ENCODE measurements at regions of chr11 and their contacts with region 1.

Region 1: DNA sequence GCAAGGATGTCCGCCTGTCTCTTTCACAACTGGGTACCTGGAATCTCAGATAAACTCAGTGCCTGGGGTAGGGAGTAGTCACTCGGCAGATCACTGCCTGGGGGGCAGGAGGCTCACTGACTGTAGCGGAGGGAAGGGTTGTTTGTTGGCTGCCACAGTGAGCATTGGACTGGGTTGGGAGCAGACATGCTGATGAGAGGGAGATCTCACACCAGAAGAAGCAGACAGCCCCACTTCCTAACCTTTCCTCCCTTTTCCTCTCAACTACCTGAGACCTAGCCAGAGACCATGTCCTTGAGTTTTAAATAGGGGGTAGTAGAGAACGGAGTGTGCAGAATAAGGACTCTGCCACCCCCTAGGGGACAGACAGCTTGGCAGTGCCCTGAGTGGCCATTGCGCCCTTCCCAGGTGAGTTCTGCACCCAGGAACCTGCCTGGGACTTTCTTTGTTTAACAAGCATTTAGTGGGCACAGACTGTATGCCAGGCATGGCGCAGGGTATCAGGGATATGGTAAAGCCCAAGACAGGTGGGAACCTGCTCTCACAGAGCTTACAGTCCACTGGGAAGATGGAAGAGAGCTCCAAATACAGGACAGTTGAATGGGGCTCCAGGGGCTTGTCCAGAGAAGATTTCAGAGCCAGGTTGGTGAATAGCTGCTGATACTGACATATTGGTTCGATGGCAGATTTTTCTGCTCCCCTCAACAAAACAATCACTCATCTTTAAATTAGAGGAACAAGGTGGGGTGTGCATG is 115.7 kb upstream of the NNMT start:
- DNase-seq: peak; percentile 12
- ATAC-seq: peak; percentile 86
- H3K4me3 ChIP-seq: no peak overlapping the region
- H3K27ac ChIP-seq: no peak overlapping the region
- H3K4me1 ChIP-seq: no peaks in the 10 kb centered on the region
- H3K27me3 ChIP-seq: peaks cover 2 to 4% of the 10 kb centered on the region in 2 experiments; a peak in 2 of 5 replicates
- CTCF ChIP-seq: peak; percentile 63
- EP300 ChIP-seq: no peak
- POLR2A ChIP-seq: no peak
- RAD21 ChIP-seq: no peak

Region 2: DNA sequence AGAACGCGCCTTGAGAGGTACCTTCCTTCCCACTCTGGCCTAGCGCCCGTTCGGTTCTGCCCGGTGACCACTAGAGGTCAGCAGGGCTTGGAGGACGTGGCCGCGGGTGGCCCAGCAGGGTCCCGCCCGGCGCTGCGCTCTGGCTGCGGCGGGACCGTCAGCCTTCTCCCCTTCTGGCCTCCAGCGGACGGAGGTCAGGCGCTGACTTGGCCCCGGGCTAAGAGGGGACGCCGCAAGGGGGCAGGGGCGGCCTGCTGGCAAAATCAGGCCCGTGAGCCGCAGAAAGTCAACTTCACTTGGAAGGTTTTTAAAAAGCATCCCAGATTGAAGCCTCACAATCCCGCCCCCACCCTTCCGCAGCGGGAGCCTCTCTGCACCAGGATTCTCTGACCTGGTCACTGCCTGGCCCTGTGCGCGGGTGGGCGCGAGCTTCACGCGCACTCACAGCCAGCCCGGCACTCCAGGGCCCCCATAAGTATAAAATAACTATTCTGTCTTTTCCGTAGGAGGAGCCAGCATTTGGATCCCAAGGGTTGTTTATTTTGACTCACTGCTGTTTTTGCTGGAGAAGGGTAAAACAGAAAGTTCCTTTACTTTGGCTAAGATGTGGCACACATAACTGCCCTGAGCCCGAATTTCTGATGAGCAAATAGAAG is 144.2 kb before region 1 on chr11:
- CTCF ChIA-PET with region 1: interaction called, 10 read pairs
- POLR2A ChIA-PET with region 1: no interaction called
- in situ Hi-C with region 1: loop called (anchors 5 kb)
- intact Hi-C with region 1: loop called (anchors 1 kb)
- DNase-seq: peak; percentile 60
- ATAC-seq: peak; percentile 99
- H3K4me3 ChIP-seq: peak overlapping the region in 1 of 3 experiments; percentile 31; a peak in 1 of 6 replicates
- H3K27ac ChIP-seq: no peak overlapping the region
- H3K4me1 ChIP-seq: peaks cover 5% of the 10 kb centered on the region; the same call in 1 of the 2 replicates
- H3K27me3 ChIP-seq: peaks cover 0 to 17% of the 10 kb centered on the region in 2 experiments; a peak in 3 of 5 replicates
- CTCF ChIP-seq: peak; percentile 96
- EP300 ChIP-seq: no peak
- POLR2A ChIP-seq: no peak
- RAD21 ChIP-seq: peak; percentile 93

Region 3: GRCh38 chr11:114197799-114198500 is 17.5 kb after region 1 on chr11:
- CTCF ChIA-PET with region 1: no interaction called
- POLR2A ChIA-PET with region 1: no interaction called
- in situ Hi-C with region 1: no loop called
- intact Hi-C with region 1: no loop called
- DNase-seq: no peak
- ATAC-seq: no peak
- H3K4me3 ChIP-seq: no peak overlapping the region
- H3K27ac ChIP-seq: no peak overlapping the region
- H3K4me1 ChIP-seq: no peaks in the 10 kb centered on the region
- H3K27me3 ChIP-seq: peaks cover 0 to 4% of the 10 kb centered on the region in 2 experiments; a peak in 1 of 5 replicates
- CTCF ChIP-seq: no peak
- EP300 ChIP-seq: no peak
- POLR2A ChIP-seq: no peak
- RAD21 ChIP-seq: no peak

Measured in HepG2 (cell line).